ENCODE measurements at regions of chr7 and their contacts with region 1.

Region 1: DNA sequence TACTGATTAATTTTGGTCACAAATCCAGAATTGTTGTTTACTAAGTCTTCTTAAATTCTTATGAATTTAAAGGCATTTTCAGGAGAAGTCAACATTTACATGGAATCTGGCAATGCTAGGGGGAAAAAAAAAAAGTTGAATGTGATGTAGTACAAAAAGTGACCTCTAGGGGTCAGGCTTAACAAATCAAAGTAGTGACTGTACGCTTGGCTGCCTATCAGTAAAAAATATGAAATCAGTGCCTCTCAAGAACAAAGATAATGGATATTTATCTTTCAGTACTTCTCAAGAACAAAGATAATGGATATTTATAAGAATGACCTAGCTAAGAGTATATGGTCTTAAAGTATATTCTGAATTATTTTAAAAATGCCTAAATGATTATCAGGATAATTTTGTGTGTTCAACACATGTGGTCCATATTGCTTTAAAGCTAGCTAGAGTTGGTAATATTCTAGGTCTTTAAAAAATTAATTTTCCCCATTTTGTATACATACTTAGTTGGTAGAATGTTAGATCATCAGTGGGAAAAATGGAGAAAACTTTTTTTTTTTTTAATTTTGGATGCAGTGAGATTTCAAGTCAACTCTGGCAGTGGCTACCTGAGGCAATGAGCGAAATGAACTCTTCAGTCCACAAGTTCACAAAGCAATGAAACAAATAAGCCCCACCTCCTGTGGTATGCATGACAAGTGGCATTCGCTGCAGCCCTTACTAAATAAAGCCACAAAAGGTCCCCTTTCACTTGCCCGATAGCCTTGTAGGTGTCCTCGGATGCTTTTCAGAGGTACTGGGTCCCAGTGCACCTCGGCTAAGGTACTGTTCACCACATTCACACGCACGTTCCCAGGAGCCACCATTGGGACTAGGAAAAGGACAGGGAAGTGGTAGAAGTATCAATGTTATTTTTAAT is 51.2 kb upstream of the LAMB4 start:
- DNase-seq: no peak
- ATAC-seq: peak; percentile 73

Region 2: DNA sequence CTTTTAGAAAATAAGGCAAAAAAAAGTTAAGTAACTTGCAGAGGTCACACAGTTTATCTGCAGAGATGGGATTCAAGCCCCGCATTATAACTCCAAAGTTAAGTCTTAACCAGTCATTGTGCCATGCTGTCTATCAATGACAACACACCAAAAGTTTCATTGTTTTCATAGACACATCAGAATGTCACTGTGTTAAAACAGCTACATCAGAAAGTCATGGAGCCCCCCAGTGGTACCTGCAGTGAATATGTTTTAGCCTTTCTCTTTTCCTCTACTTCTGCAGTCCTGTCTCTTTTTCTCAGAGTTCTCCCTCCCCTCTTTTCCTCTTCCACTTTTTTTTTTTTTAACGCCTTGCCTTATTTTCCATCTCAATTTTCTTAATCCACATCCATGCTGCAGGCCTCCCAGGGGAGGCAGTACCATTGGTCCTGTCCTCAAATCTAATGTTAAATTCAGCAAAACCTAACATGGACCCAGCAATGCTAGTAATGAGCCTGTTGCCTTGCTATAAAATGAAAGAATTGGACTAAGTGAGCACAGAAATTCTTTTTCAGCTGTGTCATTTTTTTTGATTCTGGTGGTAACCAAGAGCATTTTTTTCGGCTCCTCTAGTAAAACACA is 278.7 kb after region 1 on chr7:
- intact Hi-C with region 1: loop called (anchors 10 kb)
- DNase-seq: no peak
- ATAC-seq: no peak

Region 3: DNA sequence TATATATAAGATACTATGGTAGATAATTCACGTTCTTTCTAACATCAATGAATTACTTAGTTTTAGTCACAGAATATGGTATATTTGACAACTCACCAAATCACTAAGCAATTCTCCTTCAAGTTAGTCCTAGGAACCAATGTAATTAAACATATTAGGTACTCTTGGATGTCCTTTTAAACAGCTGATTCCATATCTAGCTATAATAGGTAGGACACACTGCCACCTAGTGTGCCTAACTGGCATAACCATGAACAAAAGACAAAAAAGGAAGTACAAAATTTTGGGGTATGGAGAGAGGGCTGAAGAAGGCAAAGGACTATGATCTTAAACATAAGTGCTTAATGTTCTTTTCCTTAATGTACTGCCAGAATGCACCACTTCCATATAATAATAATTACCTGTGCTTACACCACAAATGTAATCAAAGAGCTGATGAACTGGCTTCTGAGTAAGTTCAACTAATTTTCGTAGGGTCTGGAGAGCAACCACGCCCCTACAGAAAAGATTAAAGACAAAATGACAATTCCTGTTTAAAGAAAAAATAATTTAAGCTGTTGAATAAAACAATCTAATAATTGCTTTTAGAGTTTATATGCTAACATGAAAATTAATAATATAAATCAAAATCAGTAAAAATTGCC is 315.9 kb after region 1 on chr7:
- intact Hi-C with region 1: loop called (anchors 10 kb)
- DNase-seq: no peak
- ATAC-seq: peak; percentile 67